GM10248 (cell line): ENCODE measurements at regions of chr10 and their contacts with region 1.

Region 1: DNA sequence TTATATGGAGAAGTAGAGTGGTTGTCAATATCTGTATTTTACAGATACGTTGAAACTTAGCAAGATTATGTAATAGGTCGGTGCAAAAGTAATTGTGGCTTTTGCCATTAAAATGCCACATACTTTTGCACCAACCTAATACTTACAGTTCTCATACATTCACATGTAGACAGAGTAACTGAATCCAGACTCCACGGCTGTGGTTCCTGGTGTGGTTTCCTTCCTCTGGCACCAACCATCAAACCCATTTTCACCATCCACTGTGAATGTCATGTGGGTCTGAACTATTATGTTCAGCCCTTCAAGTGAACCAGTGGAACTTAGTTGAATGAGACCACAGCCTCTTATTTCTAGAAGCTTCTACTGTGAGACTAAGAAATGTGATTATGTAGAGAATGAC is 31.5 kb upstream of the SLIT1 start:
- DNase-seq: no peak
- CTCF ChIP-seq: no peak

Region 2: GRCh38 chr10:97204826-97205679 is 12.2 kb before region 1 on chr10:
- CTCF ChIA-PET with region 1: interaction called, 214 read pairs
- POLR2A ChIA-PET with region 1: no interaction called
- DNase-seq: no peak
- CTCF ChIP-seq: no peak

Region 3: GRCh38 chr10:97307866-97308780 is 90.8 kb after region 1 on chr10:
- CTCF ChIA-PET with region 1: no interaction called
- POLR2A ChIA-PET with region 1: no interaction called
- DNase-seq: no peak
- CTCF ChIP-seq: no peak

Region 4: GRCh38 chr10:97388152-97388551 is 170.9 kb after region 1 on chr10:
- CTCF ChIA-PET with region 1: no interaction called
- POLR2A ChIA-PET with region 1: no interaction called
- DNase-seq: no peak
- CTCF ChIP-seq: no peak